Sciatic nerve (tissue), 2 donors: ENCODE measurements at regions of chr11 and their contacts with region 1.

Region 1: DNA sequence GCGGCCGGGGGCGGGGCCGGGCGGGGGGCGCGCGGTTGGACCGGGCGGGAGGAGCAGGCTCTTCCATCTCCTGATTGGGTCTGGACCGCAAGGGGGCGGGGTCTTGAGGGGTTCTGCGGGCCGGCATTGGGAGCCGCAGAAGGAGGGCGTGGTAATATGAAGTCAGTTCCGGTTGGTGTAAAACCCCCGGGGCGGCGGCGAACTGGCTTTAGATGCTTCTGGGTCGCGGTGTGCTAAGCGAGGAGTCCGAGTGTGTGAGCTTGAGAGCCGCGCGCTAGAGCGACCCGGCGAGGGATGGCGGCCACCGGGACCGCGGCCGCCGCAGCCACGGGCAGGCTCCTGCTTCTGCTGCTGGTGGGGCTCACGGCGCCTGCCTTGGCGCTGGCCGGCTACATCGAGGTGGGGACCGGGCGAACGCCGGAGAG is at the start of gene APLP2:
- DNase-seq: peak; percentile 99
- ATAC-seq: peak; percentile 99
- total RNA-seq, gene APLP2: 222 TPM

Region 2: DNA sequence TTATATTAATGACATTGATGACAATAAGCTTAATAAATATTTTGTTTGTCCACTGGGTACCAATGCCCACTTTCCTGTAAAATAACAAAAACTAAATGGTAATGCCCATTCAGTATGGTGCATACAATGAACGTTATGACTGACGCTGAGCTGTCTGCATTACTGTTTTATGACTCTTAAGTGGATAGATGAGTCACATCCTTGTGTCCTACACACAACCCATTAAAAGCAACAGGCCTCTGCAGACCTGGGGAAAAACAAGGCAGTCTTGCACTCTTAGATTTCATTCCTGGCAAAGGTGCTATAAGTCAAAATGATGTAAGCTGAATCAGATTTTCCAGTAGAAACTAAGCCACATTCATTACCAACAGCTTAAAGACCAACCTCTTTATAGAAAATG is 430.4 kb before region 1 on chr11:
- intact Hi-C with region 1: no loop called
- DNase-seq: no peak
- ATAC-seq: no peak

Region 3: GRCh38 chr11:129723761-129724162 is 345.9 kb before region 1 on chr11:
- intact Hi-C with region 1: no loop called
- DNase-seq: peak; percentile 38
- ATAC-seq: no peak

Region 4: DNA sequence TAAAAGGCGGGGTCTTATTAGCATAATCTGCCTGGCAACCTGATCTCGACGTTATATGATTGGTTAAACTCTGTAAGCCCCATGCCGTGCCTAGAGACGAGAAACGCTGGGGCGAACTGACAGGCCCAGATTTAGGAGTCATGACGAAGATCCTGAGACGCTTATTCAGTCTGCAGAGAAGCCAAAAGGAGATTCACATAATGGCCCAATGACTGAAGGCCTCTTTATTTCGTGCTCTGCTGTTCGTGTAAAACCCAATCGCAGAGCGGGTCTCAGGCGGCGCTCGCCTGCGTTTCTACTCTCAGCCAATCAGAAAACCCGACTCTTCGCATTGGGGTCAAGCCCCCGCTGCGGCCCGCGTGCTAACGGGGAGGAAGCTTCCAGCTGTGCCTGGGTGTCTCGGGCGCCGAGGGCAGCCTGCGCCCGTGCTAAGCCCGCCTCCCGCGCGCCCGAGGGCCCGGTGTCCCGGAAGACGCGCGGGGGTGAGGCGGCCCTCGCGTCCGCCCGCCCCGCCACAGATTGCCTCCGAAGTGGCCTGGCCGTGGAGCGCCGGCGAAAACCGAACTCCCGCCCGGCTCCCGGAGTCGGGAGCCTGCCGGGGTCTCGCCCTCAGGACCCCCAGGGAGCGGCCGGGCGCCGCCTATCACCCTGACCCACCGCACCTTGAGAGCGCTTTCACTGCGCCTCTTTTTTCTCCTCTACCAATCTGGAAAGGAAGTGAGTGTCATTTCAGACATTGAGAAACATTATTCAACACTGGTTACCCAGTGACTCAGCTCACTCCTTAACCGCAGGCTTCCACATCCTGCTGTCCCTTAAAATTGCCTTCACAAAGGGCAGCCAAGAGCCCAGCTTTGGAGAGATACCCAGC is 66.6 kb before region 1 on chr11:
- intact Hi-C with region 1: loop called (anchors 10 kb)
- DNase-seq: peak; percentile 96
- ATAC-seq: peak; percentile 97